ENCODE measurements at regions of chr1 and their contacts with region 1.

Region 1: DNA sequence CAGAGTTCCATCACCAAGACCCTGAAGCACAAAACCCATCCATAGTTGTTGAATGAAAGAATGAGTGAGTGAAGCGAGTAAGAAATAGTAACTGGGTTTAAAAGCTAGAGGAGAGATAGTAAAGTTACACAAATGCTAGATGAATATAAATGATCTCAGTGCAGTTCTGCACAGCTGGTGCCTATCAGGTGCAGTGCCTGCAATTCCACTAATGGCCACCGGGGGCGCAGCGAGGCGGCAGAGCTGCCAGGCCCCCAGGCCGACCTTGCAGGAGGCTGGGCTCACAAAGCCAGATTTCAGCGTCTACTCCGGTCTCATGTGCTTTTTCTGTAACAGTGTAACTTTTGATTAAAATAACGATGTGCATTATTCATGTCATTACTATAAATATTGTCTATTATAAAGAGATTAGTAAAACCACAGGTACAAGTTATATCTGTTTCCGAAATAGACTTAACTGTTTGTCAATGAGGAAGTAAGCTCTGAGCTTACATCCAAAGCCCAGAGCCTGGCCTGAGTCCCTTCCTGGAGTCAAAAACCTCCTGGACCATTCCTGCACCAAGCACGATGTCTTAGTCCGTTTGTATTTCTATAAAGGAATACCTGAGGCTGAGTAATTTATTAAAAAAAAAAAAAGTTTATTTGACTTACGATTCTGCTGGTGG is 477.6 kb downstream of the NPHP4 start:
- H3K4me3 Mint-ChIP-seq: no peak overlapping the region
- H3K27ac Mint-ChIP-seq: no peak overlapping the region
- H3K4me1 Mint-ChIP-seq: peaks cover 10% of the 10 kb centered on the region
- H3K27me3 Mint-ChIP-seq: no peaks in the 10 kb centered on the region

Region 2: DNA sequence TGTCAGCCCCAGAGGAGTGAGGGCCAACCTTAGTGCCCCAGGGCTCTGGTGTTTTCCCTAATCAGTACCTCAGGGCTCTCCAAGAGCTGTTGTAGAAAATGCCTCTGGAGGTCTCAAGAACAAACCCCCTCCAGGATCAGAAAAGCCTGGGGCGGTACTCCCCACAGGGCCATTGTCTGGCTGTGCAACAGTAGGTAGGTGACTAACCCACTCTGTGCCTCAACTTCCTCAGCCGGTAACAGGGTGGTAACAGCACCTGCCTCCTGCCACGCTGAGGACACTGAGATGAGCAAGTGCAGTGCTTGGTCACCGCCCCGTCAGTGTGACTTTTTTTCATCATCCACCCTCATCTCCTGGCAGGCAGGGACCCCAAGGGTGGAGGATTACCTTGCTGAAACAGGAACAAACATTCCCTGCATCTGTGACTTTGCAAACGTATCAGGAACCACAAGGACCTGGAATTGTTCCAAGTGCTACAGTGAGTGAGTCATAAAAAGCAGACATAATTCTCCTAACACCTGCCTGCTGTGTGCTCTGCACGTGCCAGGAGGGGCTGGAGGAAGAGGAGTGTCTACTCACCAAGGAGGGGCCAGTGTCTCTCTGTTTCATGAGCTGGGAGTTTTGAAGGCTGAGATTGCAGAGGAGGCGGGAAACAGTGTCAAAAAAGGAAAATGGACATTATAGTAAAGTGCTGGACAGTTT is 36.8 kb after region 1 on chr1:
- intact Hi-C with region 1: no loop called
- H3K4me3 Mint-ChIP-seq: no peak overlapping the region
- H3K27ac Mint-ChIP-seq: no peak overlapping the region
- H3K4me1 Mint-ChIP-seq: peaks cover 5% of the 10 kb centered on the region
- H3K27me3 Mint-ChIP-seq: peaks cover 3% of the 10 kb centered on the region

Region 3: DNA sequence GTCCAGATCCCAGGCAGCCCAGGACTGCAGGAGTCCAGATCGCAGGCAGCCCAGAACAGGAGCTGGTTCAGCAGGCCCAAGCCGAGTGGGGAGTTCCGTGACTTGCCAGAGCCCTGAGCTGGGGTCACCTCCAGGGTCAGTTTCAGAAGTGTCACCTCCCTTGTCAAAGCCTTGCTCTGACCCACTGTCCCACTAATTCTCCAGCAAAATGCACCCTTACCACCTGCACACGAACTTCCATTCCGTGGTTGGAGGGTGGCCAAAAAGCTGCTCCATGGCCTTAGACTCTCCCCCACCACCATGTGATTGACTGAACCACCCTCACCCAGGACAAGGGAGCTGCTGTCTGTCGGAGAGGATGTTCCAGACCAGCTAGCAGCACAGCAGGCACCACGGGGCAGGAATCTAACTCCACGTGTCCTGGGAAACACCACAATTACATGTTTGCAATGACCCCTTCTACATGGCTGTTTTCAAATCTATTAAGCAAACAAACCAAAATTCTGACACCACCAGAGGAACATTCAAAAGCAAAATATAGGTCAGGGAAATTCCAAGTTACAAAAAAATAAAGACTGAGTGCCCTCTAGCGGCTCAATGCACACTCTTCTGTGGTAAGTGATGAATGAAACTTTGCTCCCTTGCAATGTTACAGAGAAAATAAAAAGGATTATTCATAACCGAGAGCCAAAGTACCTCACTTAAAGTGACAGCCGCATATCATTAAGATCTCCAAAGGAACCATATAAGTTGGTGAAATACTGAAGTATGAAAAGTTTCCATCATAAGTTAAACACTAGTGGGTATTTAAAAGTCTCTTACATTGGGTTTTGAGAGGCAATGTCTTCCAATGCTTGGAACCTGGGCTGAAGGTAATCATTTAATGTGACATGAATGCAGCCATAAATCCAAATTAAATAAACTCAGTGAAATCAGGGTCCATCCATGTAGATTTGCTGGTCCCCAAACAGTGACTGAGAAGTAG is 401.2 kb after region 1 on chr1:
- intact Hi-C with region 1: loop called (anchors 5 kb)
- H3K4me3 Mint-ChIP-seq: no peak overlapping the region
- H3K27ac Mint-ChIP-seq: no peak overlapping the region
- H3K4me1 Mint-ChIP-seq: no peaks in the 10 kb centered on the region
- H3K27me3 Mint-ChIP-seq: no peaks in the 10 kb centered on the region

Measured in dendritic cell treated with granulocyte-macrophage colony-stimulating factor and Interleukin-4, amounts not matched to agents 40 ng/mL and 50 ng/mL, for 4 days (primary cell).